Activated T-helper 2 cell treated with anti-CD3 and anti-CD28 coated beads, Interferon-gamma antibody, Interleukin-2, Interleukin-4, amounts not matched to agents 10 μg/mL and 5 μg/mL and 100 μg/mL, durations not matched to agents 14 hours and 24 hours and 36 hours (primary cell): ENCODE measurements at regions of chr5 and their contacts with region 1.

Region 1: DNA sequence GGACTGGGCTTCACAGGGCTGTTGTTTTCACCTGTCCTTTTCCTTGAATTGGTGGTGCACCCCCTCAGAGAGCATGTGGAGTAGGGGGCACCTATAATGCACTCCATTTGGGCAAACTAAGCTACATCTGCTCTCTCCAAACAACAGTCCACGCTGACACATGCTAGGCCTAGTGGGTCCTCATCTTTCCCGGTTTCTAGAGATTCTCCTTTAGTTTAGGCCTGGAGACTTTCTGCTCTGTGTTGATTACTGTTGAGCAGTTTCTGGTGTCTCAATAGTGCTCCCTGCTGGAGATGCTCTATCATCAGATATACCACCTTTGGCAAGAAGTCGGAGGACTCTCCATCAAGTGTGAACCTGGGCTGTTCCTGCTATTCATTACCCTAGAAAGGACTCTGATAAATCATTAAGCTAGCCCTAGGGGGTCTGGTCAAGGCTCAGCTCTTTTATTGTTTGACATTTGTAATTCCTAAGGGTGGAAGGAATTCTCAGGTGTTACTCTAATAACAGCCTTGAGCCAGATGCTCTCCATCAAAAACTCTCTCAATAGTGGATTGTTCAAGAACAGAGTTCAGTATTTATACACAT is 64.0 kb upstream of the FYB1 start:
- DNase-seq: peak; percentile 43
- H3K4me3 Mint-ChIP-seq: no peak overlapping the region
- H3K27ac Mint-ChIP-seq: peak overlapping the region; percentile 28
- H3K4me1 Mint-ChIP-seq: peaks cover 12% of the 10 kb centered on the region
- H3K27me3 Mint-ChIP-seq: peaks cover 27% of the 10 kb centered on the region

Region 2: DNA sequence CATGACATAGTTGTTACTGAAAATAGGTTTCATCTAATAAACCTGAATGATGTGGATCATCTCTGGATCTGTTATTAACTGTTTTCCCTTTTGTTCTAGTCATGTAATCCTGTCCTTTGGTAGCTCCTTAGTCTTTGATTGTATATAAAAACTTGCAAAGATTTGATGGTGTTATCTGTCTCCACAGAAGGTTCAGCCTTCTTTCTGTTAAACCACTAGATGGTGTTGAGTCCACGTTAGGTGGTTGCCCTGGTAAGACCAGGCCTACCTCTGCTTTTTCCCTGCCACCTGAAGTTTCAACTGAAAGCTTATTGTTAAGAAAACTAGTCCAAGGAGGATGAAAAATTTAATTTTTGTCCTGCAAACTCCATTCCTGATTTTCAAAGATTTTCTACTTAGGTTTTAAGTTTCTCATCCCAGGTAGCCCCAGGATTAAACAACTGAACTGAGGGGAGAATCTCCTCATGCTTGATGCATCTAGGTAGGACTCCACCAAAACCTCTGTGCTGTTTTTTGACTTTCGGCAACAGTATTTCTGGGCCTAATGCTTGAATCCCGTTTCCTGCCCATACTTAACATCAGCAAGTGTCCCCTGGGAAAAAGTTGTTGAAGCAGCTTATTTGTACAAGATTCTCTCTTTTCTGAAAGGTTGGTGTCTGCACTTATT is 277.6 kb before region 1 on chr5:
- intact Hi-C with region 1: loop called (anchors 10 kb)
- DNase-seq: no peak
- H3K4me3 Mint-ChIP-seq: no peak overlapping the region
- H3K27ac Mint-ChIP-seq: no peak overlapping the region
- H3K4me1 Mint-ChIP-seq: peaks cover 24% of the 10 kb centered on the region
- H3K27me3 Mint-ChIP-seq: no peaks in the 10 kb centered on the region

Region 3: GRCh38 chr5:39148983-39149534 is 134.3 kb before region 1 on chr5:
- intact Hi-C with region 1: loop called (anchors 1 kb)
- DNase-seq: no peak
- H3K4me3 Mint-ChIP-seq: no peak overlapping the region
- H3K27ac Mint-ChIP-seq: peak overlapping the region; percentile 52
- H3K4me1 Mint-ChIP-seq: peaks cover 42% of the 10 kb centered on the region
- H3K27me3 Mint-ChIP-seq: no peaks in the 10 kb centered on the region

Region 4: DNA sequence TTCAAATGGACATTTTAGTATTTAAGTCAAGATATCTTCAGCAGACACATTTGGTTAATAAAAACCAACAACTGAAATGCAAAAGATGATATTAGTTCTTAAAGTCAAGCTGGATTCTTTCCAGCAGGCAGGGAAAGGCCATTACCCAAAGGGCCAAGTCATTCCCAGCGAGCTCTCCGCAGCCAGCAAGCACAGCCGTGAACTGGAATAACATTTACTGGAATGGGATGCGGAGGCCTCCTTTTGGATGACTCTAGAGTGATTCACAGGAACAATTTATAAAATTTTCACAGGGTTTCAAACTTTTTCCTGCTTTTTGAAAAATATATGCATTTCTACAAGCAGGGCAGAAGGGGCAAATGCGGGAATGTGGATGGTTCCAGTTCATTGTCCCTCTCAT is 218.1 kb after region 1 on chr5:
- intact Hi-C with region 1: no loop called
- DNase-seq: no peak
- H3K4me3 Mint-ChIP-seq: no peak overlapping the region
- H3K27ac Mint-ChIP-seq: no peak overlapping the region
- H3K4me1 Mint-ChIP-seq: no peaks in the 10 kb centered on the region
- H3K27me3 Mint-ChIP-seq: peaks cover 2% of the 10 kb centered on the region